ENCODE measurements at regions of chr3 and their contacts with region 1.

Region 1: DNA sequence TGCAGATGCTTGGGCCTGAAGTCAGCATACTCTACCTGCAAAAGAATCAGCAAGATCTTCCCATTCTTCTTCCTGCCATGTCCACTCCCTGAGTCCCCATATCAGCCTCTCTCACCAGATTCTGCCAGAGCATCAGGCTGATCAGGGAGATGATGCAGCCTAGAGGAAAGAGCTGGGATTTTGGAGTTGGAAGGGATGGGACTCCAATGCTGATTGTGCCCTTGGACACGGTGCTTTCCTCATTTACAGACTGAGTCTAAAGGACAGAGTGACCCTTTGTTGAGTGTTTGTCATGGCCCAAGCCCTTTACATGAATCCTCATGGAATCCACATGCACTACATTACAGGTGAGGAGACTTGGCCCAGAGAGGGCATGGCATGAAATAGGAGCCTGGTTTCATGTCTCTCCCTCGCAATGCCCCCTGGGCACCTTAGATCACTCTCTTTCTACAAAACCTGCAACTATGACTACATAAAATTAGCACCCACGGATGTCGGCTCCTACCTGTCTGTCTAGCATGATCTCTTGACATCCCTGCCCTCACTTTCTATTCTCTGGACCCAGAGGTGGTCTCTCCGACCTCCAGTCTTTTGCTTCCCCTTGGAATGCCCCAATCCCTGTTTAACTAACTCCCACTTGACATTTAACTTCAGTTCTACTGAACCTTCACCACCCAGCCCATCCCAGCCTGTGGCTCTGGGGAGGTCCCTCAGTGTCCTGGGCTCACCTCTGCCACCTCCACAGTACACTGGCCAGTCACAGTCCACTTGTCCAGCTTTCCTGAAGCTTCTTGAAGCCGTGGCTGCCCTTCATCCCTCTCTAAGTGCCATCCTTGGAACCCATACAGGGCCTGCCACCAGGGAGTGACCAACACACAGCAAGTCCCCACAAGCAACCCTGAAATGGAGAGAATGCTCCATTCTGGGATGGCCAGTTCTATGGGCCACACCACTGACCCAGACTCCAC is 173.5 kb downstream of the ABHD5 start:
- DNase-seq: no peak
- H3K4me3 ChIP-seq: no peak overlapping the region
- CTCF ChIP-seq: no peak

Region 2: GRCh38 chr3:43794776-43795175 is 69.5 kb before region 1 on chr3:
- in situ Hi-C with region 1: loop called (anchors 5 kb)
- DNase-seq: no peak
- H3K4me3 ChIP-seq: no peak overlapping the region
- CTCF ChIP-seq: no peak

Region 3: GRCh38 chr3:43919029-43919428 is 54.8 kb after region 1 on chr3:
- in situ Hi-C with region 1: no loop called
- DNase-seq: no peak
- H3K4me3 ChIP-seq: no peak overlapping the region
- CTCF ChIP-seq: no peak